ENCODE measurements at regions of chr14 and their contacts with region 1.

Region 1: GRCh38 chr14:102316743-102317563 is 2.6 kb upstream of the ZNF839 start:
- DNase-seq: peak; percentile 94 to 97
- ATAC-seq: peak; percentile 92
- H3K4me3 ChIP-seq: peak overlapping the region; percentile 36 to 46
- H3K27ac ChIP-seq: peak overlapping the region in 1 of 2 donors; percentile 65
- H3K4me1 ChIP-seq: no peaks in the 10 kb centered on the region
- H3K27me3 ChIP-seq: no peaks in the 10 kb centered on the region

Region 2: GRCh38 chr14:101964297-101965144 is 352.4 kb before region 1 on chr14 and contains the start of gene DYNC1H1:
- intact Hi-C with region 1: loop called in 1 of 2 experiments (anchors 10 kb)
- DNase-seq: peak; percentile 96 to 99
- ATAC-seq: peak; percentile 94
- H3K4me3 ChIP-seq: peak within 1 kb of the TSS; percentile 87 to 94
- H3K27ac ChIP-seq: peak within 1 kb of the TSS; percentile 17 to 65
- H3K4me1 ChIP-seq: no peaks in the 10 kb centered on the region
- H3K27me3 ChIP-seq: no peaks in the 10 kb centered on the region
- total RNA-seq, gene DYNC1H1: 451 to 481 TPM

Region 3: GRCh38 chr14:102086972-102087761 is 229.8 kb before region 1 on chr14 and contains the start of gene HSP90AA1:
- intact Hi-C with region 1: loop called (anchors 10 kb)
- DNase-seq: peak; percentile 96 to 99
- ATAC-seq: peak; percentile 95
- H3K4me3 ChIP-seq: peak within 1 kb of the TSS; percentile 99
- H3K27ac ChIP-seq: peak within 1 kb of the TSS; percentile 87 to 100
- H3K4me1 ChIP-seq: peaks cover 0 to 2% of the 10 kb centered on the region in 2 donors
- H3K27me3 ChIP-seq: peaks cover 0 to 2% of the 10 kb centered on the region in 2 donors
- total RNA-seq, gene HSP90AA1: 254 to 379 TPM

Region 4: DNA sequence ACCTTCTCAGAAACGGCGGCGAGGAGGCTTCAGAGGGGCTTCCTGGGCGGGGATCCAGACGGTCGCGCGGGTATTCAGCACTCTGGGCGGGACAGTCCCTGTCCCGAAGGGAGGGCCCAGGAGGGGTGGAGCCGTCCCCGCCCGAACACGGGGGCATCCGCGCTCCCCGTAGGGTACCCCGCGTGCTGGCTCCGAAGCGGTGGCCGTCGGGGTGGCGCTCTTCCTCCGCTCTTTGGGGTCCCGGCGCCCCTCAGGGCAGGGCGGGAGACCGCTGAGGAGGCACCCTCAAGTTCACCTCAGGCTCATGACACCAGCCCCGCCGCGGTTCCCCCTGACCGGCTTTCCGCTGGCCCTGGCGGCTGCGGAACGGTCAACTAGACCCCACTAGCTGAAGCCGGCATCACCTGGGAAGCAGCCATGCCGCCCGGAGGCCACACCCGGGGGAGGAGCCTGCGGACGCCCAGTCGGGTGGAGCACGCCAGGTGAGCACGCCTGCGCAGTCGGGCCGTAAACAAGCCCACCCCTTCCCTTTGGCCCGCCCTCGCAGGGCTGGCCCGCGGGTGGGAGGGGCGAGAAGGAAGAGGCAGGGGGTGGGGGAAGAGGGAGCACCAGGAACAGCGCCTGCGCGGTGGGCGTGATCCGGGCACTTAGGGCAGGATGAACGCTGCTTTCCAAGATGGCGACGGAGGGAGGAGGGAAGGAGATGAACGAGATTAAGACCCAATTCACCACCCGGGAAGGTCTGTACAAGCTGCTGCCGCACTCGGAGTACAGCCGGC is 177.5 kb before region 1 on chr14 and contains the start of gene WDR20:
- intact Hi-C with region 1: loop called in 1 of 2 experiments (anchors 5 kb)
- DNase-seq: peak; percentile 98 to 99
- ATAC-seq: peak; percentile 100
- H3K4me3 ChIP-seq: peak within 1 kb of the TSS; percentile 67 to 79
- H3K27ac ChIP-seq: peak within 1 kb of the TSS in 1 of 2 donors; percentile 22
- H3K4me1 ChIP-seq: no peaks in the 10 kb centered on the region
- H3K27me3 ChIP-seq: no peaks in the 10 kb centered on the region
- total RNA-seq, gene WDR20: 27.5 to 35.0 TPM

Region 5: GRCh38 chr14:102235275-102235897 is 81.6 kb before region 1 on chr14:
- intact Hi-C with region 1: loop called (anchors 1 to 5 kb)
- DNase-seq: peak; percentile 88 to 94
- ATAC-seq: peak; percentile 91
- H3K4me3 ChIP-seq: no peak overlapping the region
- H3K27ac ChIP-seq: no peak overlapping the region
- H3K4me1 ChIP-seq: no peaks in the 10 kb centered on the region
- H3K27me3 ChIP-seq: no peaks in the 10 kb centered on the region

Region 6: DNA sequence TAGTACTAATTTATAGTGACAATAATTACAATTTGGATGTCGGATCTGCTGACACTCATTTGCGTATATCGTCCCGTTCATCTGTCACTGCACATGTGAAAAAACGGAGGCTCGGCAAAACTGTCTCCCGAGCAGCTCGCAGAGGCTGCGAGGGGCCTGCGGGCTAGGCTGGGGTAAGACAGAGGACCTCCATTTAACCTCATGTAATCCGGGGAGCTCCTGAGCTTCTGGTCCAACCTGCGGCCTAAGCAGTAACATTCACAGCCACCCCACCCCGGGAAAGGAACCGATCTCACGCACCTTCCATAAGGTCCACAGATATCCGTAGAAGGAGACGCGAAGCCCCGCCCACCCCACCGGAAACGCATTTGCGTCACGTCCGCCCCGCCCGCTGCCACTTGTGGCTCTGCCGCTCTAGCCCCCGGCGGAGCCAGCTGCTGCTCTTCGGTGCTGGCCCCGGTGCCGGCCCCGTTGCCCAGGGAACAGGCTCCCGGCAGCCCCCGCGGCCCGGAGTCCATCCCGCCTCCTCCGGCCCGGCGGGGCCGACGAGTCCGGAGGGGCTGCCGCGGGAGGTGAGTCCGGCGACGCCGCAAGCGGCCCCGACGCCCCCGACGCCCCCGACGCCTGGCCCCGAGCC is 45.7 kb after region 1 on chr14 and contains the starts of genes CINP and TECPR2:
- intact Hi-C with region 1: loop called in 1 of 2 experiments (anchors 2 kb)
- DNase-seq: peak; percentile 98 to 100
- ATAC-seq: peak; percentile 100
- H3K4me3 ChIP-seq: peak within 1 kb of the TSS; percentile 82 to 90
- H3K27ac ChIP-seq: peak within 1 kb of the TSS; percentile 61 to 72
- H3K4me1 ChIP-seq: peaks cover 0 to 6% of the 10 kb centered on the region in 2 donors
- H3K27me3 ChIP-seq: no peaks in the 10 kb centered on the region
- total RNA-seq, gene CINP: 25.9 to 30.8 TPM
- total RNA-seq, gene TECPR2: 32.2 to 32.5 TPM

Measured in aorta (tissue), 5 donors.